ENCODE measurements at regions of chr11 and their contacts with region 1.

Region 1: DNA sequence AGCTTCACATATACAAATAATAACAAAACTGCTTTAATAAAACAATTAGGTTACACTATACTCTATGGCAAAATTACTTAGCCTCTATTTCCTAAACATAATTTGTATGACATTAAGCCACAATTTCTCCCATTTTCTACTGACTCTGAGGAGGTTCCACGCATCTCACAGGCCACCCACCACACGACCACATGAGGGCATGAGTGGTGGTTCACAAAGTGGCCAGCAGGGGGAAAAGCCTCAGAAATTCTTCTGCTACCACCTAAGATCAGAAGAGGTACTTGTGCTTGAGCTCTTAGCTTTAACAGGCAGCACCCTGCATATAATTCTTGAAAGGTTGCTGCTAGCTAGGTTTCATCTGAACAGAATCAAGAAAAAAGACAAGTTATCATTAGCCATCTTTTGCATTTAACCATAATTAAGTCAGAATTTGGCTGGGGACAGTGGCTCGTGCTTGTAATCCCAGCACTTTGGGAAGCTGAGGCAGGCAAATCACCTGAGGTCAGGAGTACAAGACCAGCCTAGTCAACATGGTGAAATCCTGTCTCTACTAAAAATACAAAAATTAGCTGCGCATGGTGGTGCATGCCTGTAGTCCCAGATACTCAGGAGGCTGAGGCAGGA is 7.7 kb downstream of the LPXN start:
- DNase-seq: no peak
- H3K4me3 ChIP-seq: no peak overlapping the region
- H3K27ac ChIP-seq: no peak overlapping the region
- H3K4me1 ChIP-seq: peaks cover 3 to 10% (median 5%) of the 10 kb centered on the region in 4 donors
- H3K27me3 ChIP-seq: no peaks in the 10 kb centered on the region
- CTCF ChIP-seq: peak; percentile 66 to 85 (median 71)
- EP300 ChIP-seq: no peak
- POLR2A ChIP-seq: no peak

Region 2: GRCh38 chr11:58471892-58472291 is 96.1 kb before region 1 on chr11:
- intact Hi-C with region 1: no loop called
- DNase-seq: no peak
- H3K4me3 ChIP-seq: no peak overlapping the region
- H3K27ac ChIP-seq: no peak overlapping the region
- H3K4me1 ChIP-seq: no peaks in the 10 kb centered on the region
- H3K27me3 ChIP-seq: no peaks in the 10 kb centered on the region
- CTCF ChIP-seq: no peak
- EP300 ChIP-seq: no peak
- POLR2A ChIP-seq: no peak

Region 3: DNA sequence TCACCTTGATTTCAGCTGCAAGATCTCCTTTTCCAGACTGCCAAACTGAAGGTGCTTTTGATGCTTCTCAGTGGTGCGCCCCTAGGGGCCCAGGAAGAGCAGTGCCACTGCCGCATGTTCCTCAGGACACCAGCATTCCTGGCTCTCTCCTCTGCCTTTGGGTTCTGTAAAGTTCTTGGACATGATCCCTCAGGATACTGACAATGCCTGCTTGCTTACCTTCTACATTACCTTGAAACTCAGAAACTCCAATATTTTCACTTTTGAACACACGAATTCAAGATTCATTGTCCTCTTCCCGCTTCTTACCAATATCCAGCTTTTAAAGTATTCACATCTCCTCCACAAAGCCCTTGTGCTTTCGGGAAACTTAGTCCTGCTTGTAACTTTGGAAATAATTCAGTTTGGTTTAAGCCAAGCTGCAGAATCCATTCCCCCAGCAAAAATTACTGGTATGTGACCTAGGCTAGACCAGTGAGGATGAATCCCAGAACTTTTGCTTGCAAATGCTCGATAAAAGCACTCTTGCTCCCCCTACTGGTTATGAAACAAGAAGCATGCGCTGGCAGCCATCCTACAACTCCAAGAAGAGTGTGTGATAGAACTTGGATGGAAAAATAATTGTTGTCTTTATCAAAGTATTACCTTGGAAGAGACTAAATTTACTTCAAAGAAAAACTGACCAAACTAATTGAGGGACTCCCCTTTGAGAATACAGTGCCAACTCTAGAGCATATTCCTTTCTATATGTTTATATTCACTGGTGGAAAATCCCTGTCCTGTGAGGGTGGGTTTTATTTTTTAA is 43.6 kb before region 1 on chr11:
- intact Hi-C with region 1: no loop called
- DNase-seq: no peak
- H3K4me3 ChIP-seq: peak overlapping the region in 3 of 4 donors; percentile 5 to 25 (median 13)
- H3K27ac ChIP-seq: peak overlapping the region in 2 of 4 donors; percentile 33 to 55
- H3K4me1 ChIP-seq: peaks cover 5 to 25% (median 21%) of the 10 kb centered on the region in 4 donors
- H3K27me3 ChIP-seq: no peaks in the 10 kb centered on the region
- CTCF ChIP-seq: peak; percentile 60 to 63 (median 60)
- EP300 ChIP-seq: no peak
- POLR2A ChIP-seq: no peak

Region 4: GRCh38 chr11:58579192-58580129 is 11.5 kb after region 1 on chr11:
- intact Hi-C with region 1: no loop called
- DNase-seq: peak; percentile 97
- H3K4me3 ChIP-seq: peak overlapping the region; percentile 85 to 98 (median 95)
- H3K27ac ChIP-seq: peak overlapping the region; percentile 99 to 100 (median 100)
- H3K4me1 ChIP-seq: peaks cover 57 to 73% (median 72%) of the 10 kb centered on the region in 4 donors
- H3K27me3 ChIP-seq: no peaks in the 10 kb centered on the region
- CTCF ChIP-seq: peak; percentile 74 to 78 (median 75)
- EP300 ChIP-seq: no peak
- POLR2A ChIP-seq: peak; percentile 47

Region 5: GRCh38 chr11:58629857-58630256 is 61.9 kb after region 1 on chr11:
- intact Hi-C with region 1: loop called (anchors 5 kb)
- DNase-seq: no peak
- H3K4me3 ChIP-seq: no peak overlapping the region
- H3K27ac ChIP-seq: peak overlapping the region in 1 of 4 donors; percentile 67
- H3K4me1 ChIP-seq: peaks cover 16 to 26% (median 22%) of the 10 kb centered on the region in 4 donors
- H3K27me3 ChIP-seq: no peaks in the 10 kb centered on the region
- CTCF ChIP-seq: peak; percentile 47 to 64 (median 52)
- EP300 ChIP-seq: no peak
- POLR2A ChIP-seq: no peak

Region 6: GRCh38 chr11:58675334-58676155 is 107.5 kb after region 1 on chr11:
- intact Hi-C with region 1: loop called (anchors 10 kb)
- DNase-seq: no peak
- H3K4me3 ChIP-seq: no peak overlapping the region
- H3K27ac ChIP-seq: no peak overlapping the region
- H3K4me1 ChIP-seq: peaks cover 0 to 6% (median 0%) of the 10 kb centered on the region in 4 donors
- H3K27me3 ChIP-seq: peaks cover 0 to 19% (median 0%) of the 10 kb centered on the region in 4 donors
- CTCF ChIP-seq: peak; percentile 76 to 94 (median 88)
- EP300 ChIP-seq: no peak
- POLR2A ChIP-seq: no peak